ENCODE measurements at regions of chr12 and their contacts with region 1.

Region 1: GRCh38 chr12:8609061-8609570 is 3.5 kb downstream of the AICDA start:
- DNase-seq: no peak
- ATAC-seq: no peak
- H3K4me3 ChIP-seq: no peak overlapping the region
- H3K27ac ChIP-seq: no peak overlapping the region
- H3K4me1 ChIP-seq: no peaks in the 10 kb centered on the region
- H3K27me3 ChIP-seq: no peaks in the 10 kb centered on the region

Region 2: GRCh38 chr12:7905071-7905470 is 704.0 kb before region 1 on chr12:
- intact Hi-C with region 1: no loop called
- DNase-seq: no peak
- ATAC-seq: no peak
- H3K4me3 ChIP-seq: no peak overlapping the region
- H3K27ac ChIP-seq: no peak overlapping the region
- H3K4me1 ChIP-seq: no peaks in the 10 kb centered on the region
- H3K27me3 ChIP-seq: no peaks in the 10 kb centered on the region

Region 3: GRCh38 chr12:8544295-8544694 is 64.8 kb before region 1 on chr12:
- intact Hi-C with region 1: loop called in 2 of 4 experiments (anchors 2 to 10 kb)
- DNase-seq: peak; percentile 47 to 73 (median 56)
- ATAC-seq: peak in 1 of 2 donors; percentile 71
- H3K4me3 ChIP-seq: peak overlapping the region; percentile 27
- H3K27ac ChIP-seq: no peak overlapping the region
- H3K4me1 ChIP-seq: no peaks in the 10 kb centered on the region
- H3K27me3 ChIP-seq: no peaks in the 10 kb centered on the region

Measured in right cardiac atrium (tissue), 5 donors.